Heart left ventricle (tissue), 16 donors: ENCODE measurements at regions of chr18 and their contacts with region 1.

Region 1: DNA sequence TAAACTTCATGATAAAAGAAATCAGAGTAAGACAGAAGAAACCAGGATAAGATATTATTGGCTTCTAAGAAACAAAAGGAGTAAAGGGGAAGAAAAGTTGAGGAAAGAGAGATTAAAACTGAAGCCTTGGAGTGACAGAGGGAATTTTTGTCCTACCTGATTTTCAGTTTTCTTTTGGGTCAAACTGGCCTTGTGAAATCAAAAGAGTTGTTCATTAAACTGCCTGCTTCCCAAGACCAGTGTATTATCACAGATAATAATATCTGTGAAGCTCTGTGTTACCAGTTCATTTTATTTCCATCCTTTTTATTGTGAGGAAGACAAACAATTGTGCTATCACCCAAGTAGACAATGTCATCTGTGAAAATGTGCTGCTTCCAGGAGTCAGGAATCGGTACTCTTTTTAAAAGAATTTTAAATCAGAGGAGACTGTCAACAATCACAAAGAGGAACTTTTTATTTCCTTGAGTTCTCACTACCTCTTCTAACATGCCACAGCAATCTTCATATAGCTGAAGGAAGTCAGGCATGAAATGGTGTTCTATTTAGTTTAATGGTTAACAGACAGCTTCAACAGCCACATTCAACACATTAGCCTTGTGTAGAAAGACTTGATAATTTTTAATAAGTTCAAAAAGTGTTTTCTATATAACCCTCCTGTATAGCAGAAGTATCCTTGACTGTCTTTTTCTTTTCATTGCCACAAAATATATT is 554.8 kb downstream of the PIK3C3 start:
- DNase-seq: no peak
- ATAC-seq: no peak
- H3K4me3 ChIP-seq: no peak overlapping the region
- H3K27ac ChIP-seq: no peak overlapping the region
- H3K4me1 ChIP-seq: no peaks in the 10 kb centered on the region
- H3K27me3 ChIP-seq: peaks cover 0 to 2% (median 0%) of the 10 kb centered on the region in 9 donors
- CTCF ChIP-seq: no peak
- POLR2A ChIP-seq: no peak

Region 2: GRCh38 chr18:42229211-42230210 is 280.3 kb before region 1 on chr18:
- intact Hi-C with region 1: no loop called
- DNase-seq: no peak
- ATAC-seq: no peak
- H3K4me3 ChIP-seq: no peak overlapping the region
- H3K27ac ChIP-seq: no peak overlapping the region
- H3K4me1 ChIP-seq: no peaks in the 10 kb centered on the region
- H3K27me3 ChIP-seq: no peaks in the 10 kb centered on the region
- CTCF ChIP-seq: no peak
- POLR2A ChIP-seq: no peak

Region 3: DNA sequence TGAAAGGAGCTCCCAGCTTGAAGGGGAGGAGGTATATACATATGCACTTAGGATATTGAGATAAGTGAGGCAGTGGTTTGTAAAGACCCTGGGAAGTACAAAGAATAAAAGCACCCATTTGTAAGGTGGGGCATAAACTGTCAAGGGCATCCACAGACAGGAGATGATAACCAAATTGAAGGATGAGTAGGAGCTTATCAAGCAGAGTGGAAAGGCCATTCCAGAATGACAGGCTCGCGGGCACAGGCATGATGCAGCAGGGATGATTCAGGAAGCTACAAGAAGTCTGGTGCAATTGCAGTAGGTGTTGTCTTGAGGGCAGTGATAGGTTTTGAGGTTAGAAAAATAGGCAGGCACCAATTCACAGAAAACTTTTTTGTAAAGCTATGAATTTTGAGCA is 50.0 kb before region 1 on chr18:
- intact Hi-C with region 1: loop called in 1 of 10 experiments (anchors 10 kb)
- DNase-seq: no peak
- ATAC-seq: no peak
- H3K4me3 ChIP-seq: no peak overlapping the region
- H3K27ac ChIP-seq: no peak overlapping the region
- H3K4me1 ChIP-seq: no peaks in the 10 kb centered on the region
- H3K27me3 ChIP-seq: no peaks in the 10 kb centered on the region
- CTCF ChIP-seq: no peak
- POLR2A ChIP-seq: no peak